HCT116 (cell line): ENCODE measurements at regions of chr11 and their contacts with region 1.

Region 1: DNA sequence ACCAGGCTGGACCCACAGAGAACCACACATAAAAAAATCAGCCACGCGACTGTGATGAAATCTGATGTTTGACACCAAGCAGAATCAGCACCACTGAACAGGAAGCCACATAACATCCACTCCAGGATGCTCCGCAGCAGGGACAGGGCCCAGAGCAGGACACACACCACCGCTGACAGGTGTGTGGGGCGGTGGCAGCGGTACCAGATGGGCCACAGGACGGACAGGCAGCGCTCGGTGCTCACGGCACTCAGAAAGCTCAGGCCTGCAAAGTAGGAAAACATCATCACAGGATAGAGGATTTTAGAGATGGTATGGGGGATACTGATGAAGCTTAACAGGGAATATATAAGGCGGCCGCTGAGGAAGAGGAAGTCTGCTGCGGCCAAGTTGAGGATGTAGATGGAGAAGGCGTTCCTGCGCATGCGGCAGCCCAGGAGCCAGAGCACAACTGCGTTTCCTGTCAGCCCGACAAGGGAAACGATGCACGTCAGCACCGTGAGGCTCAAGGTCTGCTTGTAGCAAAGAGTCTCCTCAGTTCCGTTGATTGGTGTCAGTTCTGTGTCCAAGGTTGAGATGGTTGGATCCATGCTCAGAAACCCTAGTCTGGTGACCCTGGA is 4.9 kb downstream of the MRGPRX1 start:
- DNase-seq: no peak
- ATAC-seq: no peak
- H3K4me3 ChIP-seq: no peak overlapping the region
- H3K27ac ChIP-seq: no peak overlapping the region
- H3K4me1 ChIP-seq: no peaks in the 10 kb centered on the region
- H3K27me3 ChIP-seq: peaks cover 100% of the 10 kb centered on the region
- CTCF ChIP-seq: no peak
- POLR2A ChIP-seq: no peak
- RAD21 ChIP-seq: no peak

Region 2: GRCh38 chr11:18617688-18618341 is 316.5 kb before region 1 on chr11:
- CTCF ChIA-PET with region 1: no interaction called
- POLR2A ChIA-PET with region 1: no interaction called
- RAD21 ChIA-PET with region 1: no interaction called
- intact Hi-C with region 1: no loop called
- DNase-seq: no peak
- ATAC-seq: no peak
- H3K4me3 ChIP-seq: no peak overlapping the region
- H3K27ac ChIP-seq: no peak overlapping the region
- H3K4me1 ChIP-seq: no peaks in the 10 kb centered on the region
- H3K27me3 ChIP-seq: no peaks in the 10 kb centered on the region
- CTCF ChIP-seq: no peak
- POLR2A ChIP-seq: no peak
- RAD21 ChIP-seq: no peak

Region 3: GRCh38 chr11:18972336-18972735 is 38.0 kb after region 1 on chr11:
- CTCF ChIA-PET with region 1: no interaction called
- POLR2A ChIA-PET with region 1: no interaction called
- RAD21 ChIA-PET with region 1: no interaction called
- intact Hi-C with region 1: loop called (anchors 1 kb)
- DNase-seq: no peak
- ATAC-seq: no peak
- H3K4me3 ChIP-seq: no peak overlapping the region
- H3K27ac ChIP-seq: no peak overlapping the region
- H3K4me1 ChIP-seq: no peaks in the 10 kb centered on the region
- H3K27me3 ChIP-seq: peaks cover 46% of the 10 kb centered on the region
- CTCF ChIP-seq: no peak
- POLR2A ChIP-seq: no peak
- RAD21 ChIP-seq: no peak